Activated CD4-positive, alpha-beta T cell treated with anti-CD3 and anti-CD28 coated beads for 36 hours (primary cell): ENCODE measurements at regions of chr5 and their contacts with region 1.

Region 1: DNA sequence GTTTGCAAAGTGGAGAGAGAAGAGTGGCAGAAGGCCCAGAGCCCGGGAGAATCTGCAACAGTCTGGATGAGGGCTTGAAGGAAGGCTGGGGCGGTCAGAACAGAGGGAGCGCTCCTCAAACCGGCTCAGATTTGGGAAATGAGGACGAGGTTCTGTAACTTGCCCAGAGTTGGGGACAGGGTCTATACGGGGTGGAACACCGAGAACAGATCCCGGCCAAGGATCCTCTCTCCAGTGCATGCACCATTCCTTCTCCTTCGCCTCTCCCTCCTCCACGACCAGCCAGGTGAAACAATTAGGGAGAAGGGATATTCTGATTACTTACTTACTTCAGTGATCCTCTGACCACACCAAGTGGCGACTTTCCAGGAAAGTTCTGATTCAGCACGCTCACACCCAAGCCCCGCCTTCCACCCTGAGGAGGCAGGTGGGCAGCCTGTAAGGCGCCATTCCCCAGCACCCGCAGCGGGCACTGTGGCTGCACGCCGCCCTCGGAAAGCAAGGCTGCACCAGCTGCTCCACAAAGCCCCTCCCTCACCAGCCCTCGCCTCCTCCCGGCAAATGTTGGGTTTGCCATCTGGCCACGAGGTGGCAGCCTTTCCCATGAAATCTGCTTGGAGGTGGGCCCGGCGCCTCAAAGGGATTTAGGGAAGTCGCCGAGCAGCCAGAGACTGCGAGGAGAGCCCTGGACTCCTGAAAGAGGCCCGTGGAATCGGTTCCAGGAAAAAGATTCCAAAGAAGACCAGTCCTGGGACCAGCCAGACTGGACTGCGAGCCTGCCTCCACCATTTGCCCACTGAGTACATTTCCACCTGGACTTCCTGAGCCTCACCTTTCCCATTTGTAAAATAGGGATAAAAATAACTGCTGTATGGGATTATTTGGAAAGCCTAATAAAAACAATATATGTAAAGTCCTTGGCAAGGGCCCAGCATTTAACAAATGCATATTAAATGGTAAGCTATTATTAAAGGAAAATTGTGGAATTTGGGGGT is 22.2 kb upstream of the WWC1 start:
- DNase-seq: peak; percentile 87
- ATAC-seq: peak; percentile 79
- H3K4me3 Mint-ChIP-seq: peak overlapping the region; percentile 28
- H3K27ac Mint-ChIP-seq: no peak overlapping the region
- H3K4me1 Mint-ChIP-seq: peaks cover 18% of the 10 kb centered on the region
- H3K27me3 Mint-ChIP-seq: peaks cover 8% of the 10 kb centered on the region

Region 2: GRCh38 chr5:168282120-168282519 is 12.9 kb after region 1 on chr5:
- CTCF ChIA-PET with region 1: interaction called, 15 read pairs
- POLR2A ChIA-PET with region 1: no interaction called
- intact Hi-C with region 1: no loop called
- DNase-seq: no peak
- ATAC-seq: no peak
- H3K4me3 Mint-ChIP-seq: no peak overlapping the region
- H3K27ac Mint-ChIP-seq: no peak overlapping the region
- H3K4me1 Mint-ChIP-seq: peaks cover 8% of the 10 kb centered on the region
- H3K27me3 Mint-ChIP-seq: peaks cover 16% of the 10 kb centered on the region

Region 3: GRCh38 chr5:168422431-168422830 is 153.2 kb after region 1 on chr5:
- CTCF ChIA-PET with region 1: interaction called, 3 read pairs
- POLR2A ChIA-PET with region 1: no interaction called
- intact Hi-C with region 1: loop called (anchors 2 to 10 kb)
- DNase-seq: no peak
- ATAC-seq: no peak
- H3K4me3 Mint-ChIP-seq: no peak overlapping the region
- H3K27ac Mint-ChIP-seq: no peak overlapping the region
- H3K4me1 Mint-ChIP-seq: no peaks in the 10 kb centered on the region
- H3K27me3 Mint-ChIP-seq: no peaks in the 10 kb centered on the region

Region 4: GRCh38 chr5:168486136-168486879 is 217.1 kb after region 1 on chr5 and contains the start of gene RARS1:
- CTCF ChIA-PET with region 1: interaction called, 13 read pairs
- POLR2A ChIA-PET with region 1: no interaction called
- intact Hi-C with region 1: loop called (anchors 1 to 2 kb)
- DNase-seq: peak; percentile 94
- ATAC-seq: peak; percentile 92
- H3K4me3 Mint-ChIP-seq: peak within 1 kb of the TSS; percentile 100
- H3K27ac Mint-ChIP-seq: peak within 1 kb of the TSS; percentile 97
- H3K4me1 Mint-ChIP-seq: peaks cover 36% of the 10 kb centered on the region
- H3K27me3 Mint-ChIP-seq: no peaks in the 10 kb centered on the region
- total RNA-seq, gene RARS1: 127 to 135 TPM

Region 5: DNA sequence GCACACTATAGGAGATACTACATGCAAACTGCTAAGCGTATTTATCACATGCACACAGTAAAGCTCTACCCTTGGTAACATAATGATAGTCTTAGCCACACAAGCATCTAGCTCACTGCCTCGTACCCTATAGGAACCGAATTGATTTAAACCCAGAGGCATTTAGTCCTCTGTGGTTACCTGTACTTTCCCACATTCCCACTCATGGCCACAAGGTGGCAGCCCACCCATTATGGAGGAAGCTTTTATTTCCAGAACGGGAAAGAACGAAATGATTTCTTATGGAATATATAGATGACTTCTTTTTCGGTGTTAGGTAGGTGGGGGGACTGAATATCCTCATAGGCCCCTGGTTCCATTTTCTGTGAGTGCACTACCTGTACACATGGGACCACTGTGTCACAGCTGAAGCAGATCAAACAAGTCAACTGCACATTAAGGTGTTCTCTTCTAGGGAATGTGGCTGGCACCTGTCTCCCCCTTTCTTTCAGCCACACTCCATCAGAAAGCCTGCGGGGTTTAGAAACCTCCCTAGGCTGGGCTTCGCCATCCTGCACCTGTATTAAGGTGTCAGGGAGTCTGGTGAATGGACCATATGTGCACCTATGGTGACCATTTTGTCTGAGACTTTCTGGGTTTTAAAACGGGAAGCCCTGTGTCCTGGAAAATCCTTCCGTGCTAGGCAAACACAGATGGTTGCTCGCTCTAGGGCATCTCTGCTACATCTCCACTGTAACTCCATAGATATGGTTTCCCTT is 718.5 kb after region 1 on chr5:
- CTCF ChIA-PET with region 1: no interaction called
- POLR2A ChIA-PET with region 1: no interaction called
- intact Hi-C with region 1: loop called in 1 of 2 experiments (anchors 10 kb)
- DNase-seq: peak; percentile 79
- ATAC-seq: peak; percentile 63
- H3K4me3 Mint-ChIP-seq: no peak overlapping the region
- H3K27ac Mint-ChIP-seq: no peak overlapping the region
- H3K4me1 Mint-ChIP-seq: peaks cover 4% of the 10 kb centered on the region
- H3K27me3 Mint-ChIP-seq: peaks cover 9% of the 10 kb centered on the region